MCF 10A (cell line): ENCODE measurements at regions of chr11 and their contacts with region 1.

Region 1: GRCh38 chr11:113384551-113384950 is 3.0 kb upstream of the ANKK1 start:
- DNase-seq: peak; percentile 98
- H3K4me3 Mint-ChIP-seq: no peak overlapping the region
- H3K27ac Mint-ChIP-seq: peak overlapping the region; percentile 93
- H3K4me1 Mint-ChIP-seq: peaks cover 20% of the 10 kb centered on the region
- H3K27me3 Mint-ChIP-seq: no peaks in the 10 kb centered on the region
- CTCF ChIP-seq: no peak

Region 2: DNA sequence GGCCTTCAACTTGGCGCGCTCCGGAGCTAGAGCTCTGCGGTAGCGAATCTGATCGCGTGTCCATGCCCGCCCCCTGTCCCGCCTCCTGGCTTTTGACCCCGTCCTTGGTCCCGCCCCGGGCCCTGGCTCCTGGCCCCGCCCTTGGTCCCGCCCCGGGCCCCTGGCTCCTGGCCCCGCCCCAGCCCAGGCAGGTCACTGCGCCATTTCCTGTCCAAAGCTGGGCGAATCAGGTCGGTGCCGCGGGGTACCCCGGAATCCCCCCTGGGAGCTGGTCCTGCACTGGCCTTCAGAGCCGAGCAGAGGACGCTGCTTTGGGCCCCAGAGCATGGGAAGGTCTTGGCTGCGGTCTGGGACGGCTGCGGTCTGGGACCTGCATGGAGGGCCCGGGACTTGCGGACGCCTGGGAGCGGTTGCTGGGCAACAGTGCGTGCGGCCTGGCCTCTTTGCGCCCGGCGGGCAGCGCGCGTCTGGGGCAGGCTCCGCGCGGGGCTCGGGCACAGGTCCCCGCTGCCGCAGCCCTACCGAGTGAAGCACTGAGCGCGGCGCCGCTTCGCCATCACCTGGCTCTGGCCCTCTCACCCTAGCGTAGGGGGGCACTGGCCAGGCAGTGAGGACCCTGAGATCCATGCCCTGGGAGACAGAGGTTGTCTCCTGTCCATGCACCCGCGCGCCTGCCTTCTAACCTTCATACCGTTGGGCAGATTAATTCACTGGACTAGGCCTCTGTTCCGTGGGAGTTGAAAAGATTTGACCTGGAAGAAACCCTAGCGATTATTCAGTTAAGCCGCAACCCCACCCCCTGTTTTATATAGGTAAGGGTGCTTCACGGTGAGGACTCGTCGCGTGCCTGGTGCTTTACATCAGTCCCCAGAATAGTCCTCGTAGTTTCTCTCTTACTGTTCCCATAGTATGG is 69.9 kb before region 1 on chr11 and contains the start of gene TTC12:
- CTCF ChIA-PET with region 1: no interaction called
- POLR2A ChIA-PET with region 1: interaction called, 12 read pairs
- intact Hi-C with region 1: loop called (anchors 5 kb)
- DNase-seq: peak; percentile 92
- H3K4me3 Mint-ChIP-seq: peak within 1 kb of the TSS; percentile 80
- H3K27ac Mint-ChIP-seq: peak within 1 kb of the TSS; percentile 87
- H3K4me1 Mint-ChIP-seq: peaks cover 19% of the 10 kb centered on the region
- H3K27me3 Mint-ChIP-seq: no peaks in the 10 kb centered on the region
- CTCF ChIP-seq: no peak
- total RNA-seq, gene TTC12: 30.5 and 41.3 TPM in 2 replicates

Region 3: GRCh38 chr11:113350336-113351067 is 34.0 kb before region 1 on chr11:
- CTCF ChIA-PET with region 1: no interaction called
- POLR2A ChIA-PET with region 1: no interaction called
- intact Hi-C with region 1: no loop called
- DNase-seq: no peak
- H3K4me3 Mint-ChIP-seq: no peak overlapping the region
- H3K27ac Mint-ChIP-seq: no peak overlapping the region
- H3K4me1 Mint-ChIP-seq: no peaks in the 10 kb centered on the region
- H3K27me3 Mint-ChIP-seq: no peaks in the 10 kb centered on the region
- CTCF ChIP-seq: no peak

Region 4: GRCh38 chr11:113447621-113448315 is 63.2 kb after region 1 on chr11:
- CTCF ChIA-PET with region 1: no interaction called
- POLR2A ChIA-PET with region 1: interaction called, 27 read pairs
- intact Hi-C with region 1: loop called (anchors 1 kb)
- DNase-seq: peak; percentile 81
- H3K4me3 Mint-ChIP-seq: no peak overlapping the region
- H3K27ac Mint-ChIP-seq: peak overlapping the region; percentile 75
- H3K4me1 Mint-ChIP-seq: peaks cover 34% of the 10 kb centered on the region
- H3K27me3 Mint-ChIP-seq: no peaks in the 10 kb centered on the region
- CTCF ChIP-seq: no peak

Region 5: GRCh38 chr11:113474362-113475159 is 90.0 kb after region 1 on chr11:
- CTCF ChIA-PET with region 1: no interaction called
- POLR2A ChIA-PET with region 1: no interaction called
- intact Hi-C with region 1: no loop called
- DNase-seq: peak; percentile 87
- H3K4me3 Mint-ChIP-seq: peak overlapping the region; percentile 43
- H3K27ac Mint-ChIP-seq: no peak overlapping the region
- H3K4me1 Mint-ChIP-seq: peaks cover 2% of the 10 kb centered on the region
- H3K27me3 Mint-ChIP-seq: peaks cover 41% of the 10 kb centered on the region
- CTCF ChIP-seq: no peak